Endothelial cell of umbilical vein (primary cell): ENCODE measurements at regions of chr1 and their contacts with region 1.

Region 1: GRCh38 chr1:50605186-50605875 is 182.1 kb upstream of the DMRTA2 start:
- DNase-seq: peak; percentile 69
- H3K4me3 ChIP-seq: no peak overlapping the region
- H3K27ac ChIP-seq: no peak overlapping the region
- H3K4me1 ChIP-seq: peaks cover 18% of the 10 kb centered on the region
- H3K27me3 ChIP-seq: no peaks in the 10 kb centered on the region
- CTCF ChIP-seq: peak; percentile 40 to 60
- POLR2A ChIP-seq: no peak

Region 2: GRCh38 chr1:50368179-50369012 is 236.9 kb before region 1 on chr1:
- CTCF ChIA-PET with region 1: interaction called, 170 read pairs
- POLR2A ChIA-PET with region 1: no interaction called
- dilution Hi-C with region 1: no loop called
- intact Hi-C with region 1: loop called (anchors 1 kb)
- DNase-seq: peak; percentile 26
- H3K4me3 ChIP-seq: no peak overlapping the region
- H3K27ac ChIP-seq: no peak overlapping the region
- H3K4me1 ChIP-seq: no peaks in the 10 kb centered on the region
- H3K27me3 ChIP-seq: peaks cover 11 to 15% of the 10 kb centered on the region in 2 experiments
- CTCF ChIP-seq: peak; percentile 51 to 62
- POLR2A ChIP-seq: no peak

Region 3: DNA sequence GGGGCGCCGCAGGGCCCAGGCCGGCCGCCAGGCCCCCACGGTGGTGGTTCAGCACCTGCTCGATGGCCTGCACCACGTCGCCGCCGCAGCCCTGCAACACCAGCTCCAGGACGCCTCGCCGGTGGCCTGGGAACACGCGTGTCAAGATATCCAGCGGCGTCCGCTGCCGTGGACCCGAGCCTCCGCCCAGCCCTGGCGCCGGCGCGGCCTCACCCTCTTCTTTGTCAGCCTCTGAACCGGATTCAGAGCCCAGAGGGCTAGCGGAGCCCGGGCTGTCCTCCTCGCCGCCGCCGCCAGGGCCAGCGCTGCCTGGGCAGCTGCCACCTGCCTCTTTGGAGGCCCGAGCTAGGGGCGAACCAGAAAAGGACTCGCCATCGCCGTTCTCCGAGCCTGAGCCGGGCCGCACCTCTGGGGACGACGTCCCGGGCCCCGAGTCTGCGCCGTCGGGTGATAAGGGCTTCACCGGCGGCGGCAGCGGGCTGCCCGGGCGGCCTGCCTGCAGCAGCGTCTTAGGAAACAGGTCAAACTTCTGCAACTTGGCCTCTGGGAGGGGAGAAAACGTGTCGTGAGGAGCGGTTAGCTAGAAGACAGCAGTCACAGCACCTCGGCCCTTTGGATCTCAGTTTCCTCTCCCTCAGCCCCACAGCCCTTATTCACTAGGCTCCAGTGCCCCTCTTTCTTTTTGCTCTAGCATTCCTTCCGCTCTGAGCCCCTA is 186.0 kb before region 1 on chr1:
- CTCF ChIA-PET with region 1: interaction called, 7 read pairs
- POLR2A ChIA-PET with region 1: no interaction called
- dilution Hi-C with region 1: no loop called
- intact Hi-C with region 1: loop called (anchors 1 kb)
- DNase-seq: no peak
- H3K4me3 ChIP-seq: no peak overlapping the region
- H3K27ac ChIP-seq: no peak overlapping the region
- H3K4me1 ChIP-seq: peaks cover 3% of the 10 kb centered on the region
- H3K27me3 ChIP-seq: peaks cover 85 to 100% of the 10 kb centered on the region in 2 experiments
- CTCF ChIP-seq: peak; percentile 10 to 45
- POLR2A ChIP-seq: no peak

Region 4: GRCh38 chr1:50531027-50531426 is 74.3 kb before region 1 on chr1:
- CTCF ChIA-PET with region 1: interaction called, 4 read pairs
- POLR2A ChIA-PET with region 1: no interaction called
- dilution Hi-C with region 1: no loop called
- intact Hi-C with region 1: loop called (anchors 2 kb)
- DNase-seq: peak; percentile 21
- H3K4me3 ChIP-seq: no peak overlapping the region
- H3K27ac ChIP-seq: no peak overlapping the region
- H3K4me1 ChIP-seq: no peaks in the 10 kb centered on the region
- H3K27me3 ChIP-seq: no peaks in the 10 kb centered on the region
- CTCF ChIP-seq: no peak
- POLR2A ChIP-seq: no peak

Region 5: DNA sequence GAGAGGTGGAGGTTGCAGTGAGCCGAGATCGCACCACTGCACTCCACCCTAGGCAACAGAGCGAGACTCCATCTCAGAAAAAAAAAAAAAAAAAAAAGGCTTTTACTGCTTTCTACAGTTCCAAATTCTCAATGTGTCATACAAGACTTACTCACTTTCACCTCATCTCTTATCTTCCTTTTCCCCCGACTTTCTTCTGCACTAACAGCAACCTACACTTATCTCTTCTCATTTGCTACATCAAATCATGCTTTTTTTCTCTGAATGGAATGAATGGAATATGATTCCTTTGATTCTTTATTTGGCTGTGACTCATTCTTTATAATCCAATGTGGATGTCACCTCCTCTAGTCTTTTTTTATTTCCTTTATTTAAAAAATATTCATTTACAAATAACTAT is 13.7 kb before region 1 on chr1:
- CTCF ChIA-PET with region 1: interaction called, 11 read pairs
- POLR2A ChIA-PET with region 1: interaction called, 3 read pairs
- dilution Hi-C with region 1: no loop called
- intact Hi-C with region 1: no loop called
- DNase-seq: no peak
- H3K4me3 ChIP-seq: no peak overlapping the region
- H3K27ac ChIP-seq: no peak overlapping the region
- H3K4me1 ChIP-seq: no peaks in the 10 kb centered on the region
- H3K27me3 ChIP-seq: no peaks in the 10 kb centered on the region
- CTCF ChIP-seq: no peak
- POLR2A ChIP-seq: no peak